ENCODE measurements at regions of chrX and their contacts with region 1.

Region 1: DNA sequence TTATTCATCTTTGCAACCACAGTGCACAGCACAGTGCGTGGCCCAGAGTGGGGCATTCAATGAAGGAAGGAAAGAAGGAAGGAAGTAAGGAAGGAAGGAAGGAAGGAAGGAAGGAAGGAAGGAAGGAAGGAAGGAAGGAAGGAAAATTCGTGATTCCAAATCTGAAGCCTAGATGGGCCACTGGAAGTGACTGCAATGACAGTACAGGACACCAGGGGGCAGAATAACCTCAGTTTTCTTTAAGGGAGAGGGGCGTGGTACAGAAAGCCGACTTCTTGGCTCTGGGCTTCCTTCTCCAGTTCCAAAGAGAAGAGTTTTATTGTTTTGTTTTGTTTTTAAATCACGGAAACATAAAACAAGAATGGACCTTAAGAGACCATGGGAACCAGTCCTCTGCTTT is 47.8 kb downstream of the APLN start:
- DNase-seq: peak; percentile 48
- H3K4me3 ChIP-seq: no peak overlapping the region
- H3K27ac ChIP-seq: no peak overlapping the region
- H3K4me1 ChIP-seq: peaks cover 12% of the 10 kb centered on the region
- H3K27me3 ChIP-seq: no peaks in the 10 kb centered on the region
- CTCF ChIP-seq: peak; percentile 42 to 51
- POLR2A ChIP-seq: no peak

Region 2: DNA sequence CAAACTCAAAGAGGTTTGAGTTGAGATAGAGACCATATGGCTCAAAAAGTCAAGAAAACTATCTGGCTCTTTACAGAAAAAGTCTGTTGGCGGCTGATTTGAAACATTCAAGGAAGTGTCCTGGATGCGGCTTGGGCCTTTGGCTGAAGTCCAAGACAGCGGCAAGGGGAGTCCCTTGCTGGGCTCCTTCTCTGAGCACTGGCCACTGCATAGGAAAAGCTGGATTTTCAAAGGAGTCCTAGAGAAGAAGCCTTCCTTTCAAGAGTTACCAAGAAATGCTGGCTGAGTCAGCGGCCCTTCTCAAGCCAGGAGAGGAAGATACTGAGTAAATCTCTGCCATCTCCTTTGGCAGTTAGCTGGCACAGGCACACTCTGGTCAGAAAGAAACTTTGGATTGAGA is 35.7 kb after region 1 on chrX:
- CTCF ChIA-PET with region 1: interaction called, 15 read pairs
- POLR2A ChIA-PET with region 1: interaction called, 4 read pairs
- dilution Hi-C with region 1: no loop called
- intact Hi-C with region 1: loop called (anchors 1 kb)
- DNase-seq: no peak
- H3K4me3 ChIP-seq: no peak overlapping the region
- H3K27ac ChIP-seq: no peak overlapping the region
- H3K4me1 ChIP-seq: peaks cover 4% of the 10 kb centered on the region
- H3K27me3 ChIP-seq: no peaks in the 10 kb centered on the region
- CTCF ChIP-seq: no peak
- POLR2A ChIP-seq: no peak

Region 3: GRCh38 chrX:129726307-129727111 is 119.6 kb after region 1 on chrX:
- CTCF ChIA-PET with region 1: interaction called, 58 read pairs
- POLR2A ChIA-PET with region 1: no interaction called
- dilution Hi-C with region 1: no loop called
- intact Hi-C with region 1: loop called (anchors 1 kb)
- DNase-seq: peak; percentile 76
- H3K4me3 ChIP-seq: no peak overlapping the region
- H3K27ac ChIP-seq: no peak overlapping the region
- H3K4me1 ChIP-seq: peaks cover 43% of the 10 kb centered on the region
- H3K27me3 ChIP-seq: no peaks in the 10 kb centered on the region
- CTCF ChIP-seq: peak; percentile 64 to 74
- POLR2A ChIP-seq: no peak

Region 4: GRCh38 chrX:129843459-129844306 is 236.8 kb after region 1 on chrX and contains the start of gene ZDHHC9:
- CTCF ChIA-PET with region 1: no interaction called
- POLR2A ChIA-PET with region 1: no interaction called
- dilution Hi-C with region 1: no loop called
- intact Hi-C with region 1: loop called (anchors 5 kb)
- DNase-seq: peak; percentile 88
- H3K4me3 ChIP-seq: peak within 1 kb of the TSS; percentile 64 to 90 (median 69)
- H3K27ac ChIP-seq: peak within 1 kb of the TSS; percentile 59
- H3K4me1 ChIP-seq: peaks cover 4% of the 10 kb centered on the region
- H3K27me3 ChIP-seq: peaks cover 3 to 6% of the 10 kb centered on the region in 2 experiments
- CTCF ChIP-seq: no peak
- POLR2A ChIP-seq: peak; percentile 28
- total RNA-seq, gene ZDHHC9: 33.6 and 38.2 TPM in 2 replicates

Region 5: DNA sequence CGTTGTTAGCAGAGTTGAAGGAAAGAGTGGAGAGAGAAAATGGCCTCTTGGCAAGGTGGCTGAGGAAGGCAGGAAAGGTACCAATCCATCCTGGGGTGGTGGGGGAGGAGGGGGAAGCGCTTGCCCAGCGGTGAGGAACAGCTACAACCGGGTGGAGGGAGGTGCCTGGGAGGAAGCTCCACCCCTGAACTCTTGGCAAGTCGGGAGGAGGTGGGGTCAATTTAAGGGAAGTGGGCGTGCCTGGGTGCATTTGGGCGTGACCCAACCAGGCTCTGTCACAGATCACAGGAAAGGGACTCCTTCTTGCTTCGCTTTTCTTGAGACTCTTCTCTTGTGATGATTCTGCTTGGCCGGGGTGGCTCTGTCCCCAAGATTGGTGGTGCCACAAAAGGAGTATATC is 417.2 kb after region 1 on chrX:
- CTCF ChIA-PET with region 1: interaction called, 10 read pairs
- POLR2A ChIA-PET with region 1: no interaction called
- dilution Hi-C with region 1: no loop called
- intact Hi-C with region 1: loop called (anchors 1 kb)
- DNase-seq: peak; percentile 28
- H3K4me3 ChIP-seq: no peak overlapping the region
- H3K27ac ChIP-seq: no peak overlapping the region
- H3K4me1 ChIP-seq: peaks cover 4% of the 10 kb centered on the region
- H3K27me3 ChIP-seq: no peaks in the 10 kb centered on the region
- CTCF ChIP-seq: no peak
- POLR2A ChIP-seq: no peak

Region 6: GRCh38 chrX:130299279-130300009 is 692.5 kb after region 1 on chrX:
- CTCF ChIA-PET with region 1: no interaction called
- POLR2A ChIA-PET with region 1: no interaction called
- dilution Hi-C with region 1: no loop called
- intact Hi-C with region 1: no loop called
- DNase-seq: no peak
- H3K4me3 ChIP-seq: no peak overlapping the region
- H3K27ac ChIP-seq: no peak overlapping the region
- H3K4me1 ChIP-seq: no peaks in the 10 kb centered on the region
- H3K27me3 ChIP-seq: no peaks in the 10 kb centered on the region
- CTCF ChIP-seq: no peak
- POLR2A ChIP-seq: no peak